ENCODE measurements at regions of chr1 and their contacts with region 1.

Region 1: DNA sequence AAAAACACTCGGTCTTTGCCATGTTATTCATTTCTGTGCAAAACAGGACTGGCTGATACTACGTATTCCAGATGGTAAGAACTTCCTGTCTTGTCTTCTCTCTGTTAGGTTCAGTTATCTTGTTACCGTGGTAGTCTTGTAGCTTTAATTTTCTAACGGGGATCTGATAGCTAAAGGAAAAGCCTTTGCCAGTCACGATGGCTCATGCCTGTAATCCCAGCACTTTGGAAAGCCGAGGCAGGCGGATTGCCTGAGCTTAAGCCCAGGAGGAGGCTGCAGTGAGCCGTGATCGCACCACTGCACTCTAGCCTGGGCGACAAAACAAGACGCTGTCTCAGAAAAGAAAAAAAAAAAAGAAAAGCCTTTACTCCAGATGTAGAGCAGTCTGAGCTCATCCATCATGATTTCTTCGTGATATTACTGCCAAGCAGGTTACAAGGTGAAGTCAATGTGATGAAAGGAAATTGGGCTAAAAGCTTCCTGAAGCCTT is 11.1 kb upstream of the MSTO1 start:
- DNase-seq: no peak

Region 2: DNA sequence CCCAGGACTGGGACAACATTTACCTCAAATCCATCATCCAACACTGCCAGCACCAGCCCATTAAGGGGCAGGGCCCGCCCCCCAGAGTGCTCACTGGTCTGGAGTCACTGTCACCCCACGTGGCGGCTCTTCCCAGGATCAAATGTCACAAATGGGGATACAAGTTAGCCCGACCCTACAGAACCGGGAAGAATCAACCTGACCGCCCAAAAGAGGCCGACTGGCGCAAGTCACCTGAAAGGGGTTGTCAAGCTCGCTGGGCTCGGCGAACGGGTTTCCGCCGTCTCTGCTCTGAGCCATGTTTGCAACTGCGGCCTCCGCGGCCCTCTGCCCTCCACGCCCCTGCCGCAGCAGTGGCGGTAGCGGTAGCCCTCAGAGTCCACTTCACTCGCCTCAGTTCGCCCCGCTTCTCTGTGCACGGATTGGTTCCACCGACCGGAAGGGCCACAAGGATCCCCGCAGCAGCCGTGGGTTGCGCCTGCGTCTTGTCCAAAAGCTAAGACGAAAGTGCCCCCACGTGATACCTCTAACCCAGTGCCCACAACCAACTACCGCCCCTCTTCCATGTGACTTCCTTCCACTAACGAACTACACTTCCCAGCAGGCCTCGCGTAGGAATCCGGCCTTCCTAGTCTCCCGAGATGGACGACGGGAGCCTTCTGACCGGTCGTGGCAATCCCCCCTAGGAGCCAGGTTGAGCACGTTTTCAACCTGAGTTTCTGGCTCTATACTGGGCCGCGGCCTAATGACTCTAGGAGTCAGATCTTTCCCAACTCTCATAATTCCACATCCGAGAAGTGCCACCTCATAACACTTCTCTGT is 336.8 kb before region 1 on chr1 and contains the start of gene SCAMP3:
- CTCF ChIA-PET with region 1: interaction called, 10 read pairs
- POLR2A ChIA-PET with region 1: no interaction called
- DNase-seq: peak; percentile 98

Region 3: GRCh38 chr1:155609515-155610256 is 10.8 kb after region 1 on chr1 and contains the start of gene MSTO1:
- CTCF ChIA-PET with region 1: no interaction called
- POLR2A ChIA-PET with region 1: interaction called, 12 read pairs
- DNase-seq: peak; percentile 93

Region 4: DNA sequence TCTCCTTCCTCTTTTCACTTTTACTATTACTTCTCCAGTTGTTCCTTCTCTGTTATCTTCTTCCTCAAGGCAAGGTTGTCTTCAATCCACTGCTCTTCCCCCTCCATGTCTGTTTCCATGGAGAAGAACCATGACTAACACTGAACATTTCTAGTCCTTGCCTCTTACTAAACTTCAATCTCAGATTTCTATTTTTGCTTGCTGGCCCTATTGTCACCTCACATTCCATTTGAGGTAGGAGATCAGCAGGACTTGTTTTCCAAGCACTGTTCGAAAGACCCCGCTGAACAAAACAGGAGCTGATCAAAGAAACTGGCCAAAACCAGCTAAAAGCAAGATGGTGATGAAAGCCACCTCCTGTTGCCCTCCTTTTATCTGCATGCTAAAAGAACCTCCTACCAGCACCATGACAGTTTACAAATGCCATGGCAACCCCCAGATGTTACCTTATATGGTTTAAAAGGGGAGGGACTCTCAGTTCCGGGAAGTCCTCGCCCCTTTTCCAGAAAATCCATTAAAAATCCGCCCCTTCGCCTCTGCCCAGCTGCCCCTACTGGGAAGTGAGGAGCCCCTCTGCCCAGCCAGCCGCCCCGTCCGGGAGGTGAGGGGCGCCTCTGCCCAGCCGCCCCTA is 235.5 kb after region 1 on chr1:
- CTCF ChIA-PET with region 1: no interaction called
- POLR2A ChIA-PET with region 1: no interaction called
- DNase-seq: no peak

Measured in HEK293T (cell line).